Activated naive CD8-positive, alpha-beta T cell treated with anti-CD3 and anti-CD28 coated beads, Interleukin-2, amount 10 ng/mL, durations not matched to agents 7 days and 5 days (primary cell): ENCODE measurements at regions of chr17 and their contacts with region 1.

Region 1: GRCh38 chr17:40068917-40069750 is 6.4 kb downstream of the THRA start:
- DNase-seq: peak; percentile 78
- ATAC-seq: peak; percentile 77
- H3K4me3 Mint-ChIP-seq: peak overlapping the region; percentile 85
- H3K27ac Mint-ChIP-seq: peak overlapping the region; percentile 88
- H3K4me1 Mint-ChIP-seq: peaks cover 42% of the 10 kb centered on the region
- H3K27me3 Mint-ChIP-seq: peaks cover 5% of the 10 kb centered on the region

Region 2: DNA sequence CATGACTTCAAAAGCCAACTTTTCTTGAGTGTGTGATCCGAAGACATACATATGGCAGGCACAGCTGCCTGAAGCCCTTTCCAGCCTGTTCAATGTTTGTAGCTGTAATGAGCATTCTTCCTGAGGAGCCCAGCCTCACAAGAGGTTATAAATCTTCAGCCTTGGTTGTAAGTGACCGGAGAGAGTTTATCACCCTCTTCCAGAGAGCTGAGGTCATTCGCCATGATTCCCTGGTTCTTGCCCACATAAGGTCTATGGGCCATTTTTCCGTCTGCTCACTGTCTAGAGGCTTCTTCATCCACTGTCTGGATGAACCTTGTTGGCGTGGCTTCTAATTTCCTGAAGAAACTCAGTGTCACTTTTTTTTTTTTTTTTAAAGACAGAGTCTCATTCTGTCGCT is 63.6 kb before region 1 on chr17:
- POLR2A ChIA-PET with region 1: no interaction called
- DNase-seq: no peak
- ATAC-seq: no peak
- H3K4me3 Mint-ChIP-seq: no peak overlapping the region
- H3K27ac Mint-ChIP-seq: no peak overlapping the region
- H3K4me1 Mint-ChIP-seq: peaks cover 3% of the 10 kb centered on the region
- H3K27me3 Mint-ChIP-seq: no peaks in the 10 kb centered on the region

Region 3: DNA sequence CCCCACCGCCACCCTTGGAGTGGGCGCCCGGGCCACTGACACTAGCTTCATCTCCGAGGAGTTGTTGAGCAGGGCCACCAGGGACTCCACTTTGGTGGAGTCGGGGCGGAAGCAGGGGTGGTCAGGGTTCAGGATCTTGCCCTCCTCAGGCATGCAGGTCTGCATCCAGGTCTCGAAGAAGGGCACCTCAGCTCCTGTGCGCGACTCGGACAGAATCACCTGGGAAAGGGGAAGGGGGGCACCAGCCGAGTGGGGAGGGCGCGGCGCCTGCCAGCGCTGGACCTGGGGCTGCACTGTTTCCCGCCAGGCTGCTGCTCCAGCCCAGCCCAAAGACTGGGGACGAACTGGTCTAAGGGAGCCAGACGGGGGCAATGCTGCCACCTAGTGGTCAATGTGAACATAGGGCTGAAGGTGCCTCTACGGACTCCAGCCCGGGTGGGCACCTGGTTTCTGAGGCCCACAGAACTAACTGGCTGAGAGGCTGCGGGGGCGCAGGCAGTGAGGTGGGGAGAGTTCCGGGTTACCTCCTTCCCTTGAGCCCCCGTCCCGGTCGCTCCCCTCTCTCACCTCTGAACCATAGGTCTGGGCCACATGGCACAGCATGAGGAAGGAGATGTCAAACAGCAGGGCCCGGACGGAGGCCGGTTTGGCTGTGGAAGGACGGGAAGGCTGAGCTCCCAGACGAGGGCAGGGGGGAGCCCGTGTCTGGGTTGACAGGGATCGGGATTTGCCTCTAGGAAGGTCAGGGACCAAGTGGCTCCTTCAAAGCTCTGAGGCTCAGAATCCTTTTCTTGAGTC is 42.1 kb before region 1 on chr17:
- POLR2A ChIA-PET with region 1: no interaction called
- DNase-seq: peak; percentile 79
- ATAC-seq: peak; percentile 87
- H3K4me3 Mint-ChIP-seq: no peak overlapping the region
- H3K27ac Mint-ChIP-seq: no peak overlapping the region
- H3K4me1 Mint-ChIP-seq: peaks cover 18% of the 10 kb centered on the region
- H3K27me3 Mint-ChIP-seq: no peaks in the 10 kb centered on the region

Region 4: GRCh38 chr17:40098846-40099618 is 29.9 kb after region 1 on chr17:
- POLR2A ChIA-PET with region 1: interaction called, 12 read pairs
- DNase-seq: peak; percentile 95
- ATAC-seq: peak; percentile 55
- H3K4me3 Mint-ChIP-seq: peak overlapping the region; percentile 94
- H3K27ac Mint-ChIP-seq: peak overlapping the region; percentile 78
- H3K4me1 Mint-ChIP-seq: peaks cover 71% of the 10 kb centered on the region
- H3K27me3 Mint-ChIP-seq: no peaks in the 10 kb centered on the region

Region 5: DNA sequence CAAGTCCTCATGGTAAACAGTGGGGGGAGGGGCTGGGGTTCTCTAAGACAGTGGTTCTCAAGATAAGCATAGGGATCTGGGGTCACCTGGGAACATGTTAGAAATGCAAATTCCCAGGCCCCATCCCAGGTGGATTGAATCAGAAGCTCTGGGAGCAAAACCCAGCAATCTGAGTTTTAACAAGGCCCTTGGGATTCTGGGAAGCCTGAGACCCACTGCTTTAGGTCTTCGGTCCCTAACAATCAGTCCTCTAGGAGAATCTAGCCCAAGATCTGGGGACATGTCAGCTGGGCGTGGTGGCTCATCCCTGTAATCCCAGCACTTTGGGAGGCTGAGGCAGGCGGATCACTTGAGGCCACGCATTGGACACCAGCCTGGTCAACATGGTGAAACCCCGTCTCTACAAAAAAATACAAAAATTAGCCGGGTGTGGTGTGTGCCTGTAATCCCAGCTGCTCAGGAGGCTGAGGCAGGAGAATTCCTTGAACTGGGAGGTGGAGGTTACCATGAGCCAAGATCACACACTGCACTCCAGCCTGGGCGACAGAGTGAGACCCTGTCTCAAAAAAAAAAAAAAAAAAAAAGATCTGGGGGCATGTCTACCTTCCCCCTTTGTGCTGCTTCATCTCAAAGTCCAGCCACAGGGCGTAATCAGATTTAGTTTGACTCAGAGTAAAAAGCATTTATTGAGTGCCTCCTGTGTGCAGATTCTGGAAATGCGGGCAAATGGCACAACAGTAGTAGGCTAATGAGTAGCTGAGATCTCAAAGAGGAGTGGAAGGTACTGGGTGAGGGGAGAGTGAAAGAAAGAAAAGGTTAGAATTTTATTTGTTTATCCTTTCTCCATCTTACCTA is 40.1 kb after region 1 on chr17:
- POLR2A ChIA-PET with region 1: no interaction called
- DNase-seq: no peak
- ATAC-seq: no peak
- H3K4me3 Mint-ChIP-seq: no peak overlapping the region
- H3K27ac Mint-ChIP-seq: no peak overlapping the region
- H3K4me1 Mint-ChIP-seq: peaks cover 78% of the 10 kb centered on the region
- H3K27me3 Mint-ChIP-seq: peaks cover 12% of the 10 kb centered on the region